ENCODE measurements at regions of chr4 and their contacts with region 1.

Region 1: DNA sequence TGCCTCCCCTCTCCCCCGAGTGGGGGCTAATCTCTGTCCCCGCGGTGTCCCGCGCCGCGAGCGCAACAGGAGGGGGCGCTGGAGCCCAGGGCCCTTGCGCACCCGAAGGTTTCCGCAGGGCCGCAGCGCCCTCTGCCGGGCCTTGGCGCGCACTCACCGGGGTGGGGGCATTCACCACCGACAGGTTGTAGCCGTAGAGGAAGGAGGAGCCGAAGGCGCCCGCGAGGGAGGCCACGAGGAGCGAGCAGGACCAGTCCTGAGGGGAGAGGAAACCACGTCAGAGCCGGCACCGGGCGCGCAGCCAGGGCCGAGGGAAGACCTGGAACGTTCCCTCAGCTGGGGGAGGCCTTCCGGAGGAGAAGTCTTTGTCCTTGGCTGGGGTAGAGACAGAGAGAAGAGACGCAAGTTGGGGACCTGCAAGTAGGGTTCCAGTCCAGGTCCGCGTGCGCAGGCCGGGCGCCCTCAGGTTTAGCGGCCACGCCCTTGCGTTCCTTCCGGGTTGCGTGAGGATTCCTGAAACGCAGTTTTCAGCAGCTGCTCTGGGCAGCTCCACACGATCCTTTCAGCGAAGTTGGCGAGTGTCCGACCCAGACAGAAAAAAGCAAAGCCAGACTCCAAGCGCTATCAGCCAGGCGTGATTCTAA is 2.4 kb downstream of the SLC2A9 start:
- DNase-seq: peak; percentile 94
- H3K4me3 ChIP-seq: peak overlapping the region; percentile 23 to 41
- H3K27ac ChIP-seq: peak overlapping the region; percentile 85 to 86
- H3K4me1 ChIP-seq: peaks cover 7% of the 10 kb centered on the region
- H3K27me3 ChIP-seq: no peaks in the 10 kb centered on the region
- CTCF ChIP-seq: peak; percentile 99 to 100 (median 99)
- POLR2A ChIP-seq: peak; percentile 49

Region 2: DNA sequence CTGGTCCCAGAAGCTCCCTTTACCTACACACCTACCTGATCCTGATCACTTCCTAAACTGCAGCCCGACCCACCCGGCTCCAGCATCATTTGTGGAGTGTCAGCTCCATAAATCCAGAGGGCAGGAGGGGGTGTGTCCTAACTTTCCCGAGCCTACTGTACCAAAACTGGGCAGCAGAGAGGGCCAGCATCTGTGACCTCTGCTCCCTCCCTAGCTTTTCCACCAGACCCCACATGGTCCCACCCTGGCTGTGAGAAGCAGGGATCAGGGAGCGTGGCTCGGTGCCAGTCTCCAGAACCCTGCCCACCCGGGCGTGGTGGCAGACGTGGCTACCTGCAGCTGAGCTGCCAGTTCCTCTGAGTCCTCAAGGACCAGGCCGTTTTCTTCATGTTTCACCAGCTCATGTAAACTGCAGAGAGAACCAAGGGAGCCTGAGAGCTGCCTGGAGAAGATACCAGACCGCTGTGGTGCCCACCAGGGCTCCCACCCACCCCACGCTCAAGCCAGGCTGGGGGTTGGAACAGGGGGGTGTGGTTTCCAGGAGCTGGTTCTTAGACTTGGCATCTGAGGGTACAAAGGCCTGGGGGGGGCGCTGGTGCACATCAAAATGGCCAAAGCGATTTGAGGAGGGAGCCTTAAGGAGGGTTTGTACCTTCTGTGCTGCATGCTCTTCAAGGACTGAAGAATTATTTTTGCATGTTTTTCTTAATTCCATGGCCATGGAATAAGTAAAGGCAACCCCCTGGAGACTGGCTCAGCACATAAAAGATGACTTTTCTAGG is 314.2 kb before region 1 on chr4:
- intact Hi-C with region 1: loop called (anchors 10 kb)
- DNase-seq: no peak
- H3K4me3 ChIP-seq: no peak overlapping the region
- H3K27ac ChIP-seq: no peak overlapping the region
- H3K4me1 ChIP-seq: no peaks in the 10 kb centered on the region
- H3K27me3 ChIP-seq: no peaks in the 10 kb centered on the region
- CTCF ChIP-seq: no peak
- POLR2A ChIP-seq: no peak

Region 3: DNA sequence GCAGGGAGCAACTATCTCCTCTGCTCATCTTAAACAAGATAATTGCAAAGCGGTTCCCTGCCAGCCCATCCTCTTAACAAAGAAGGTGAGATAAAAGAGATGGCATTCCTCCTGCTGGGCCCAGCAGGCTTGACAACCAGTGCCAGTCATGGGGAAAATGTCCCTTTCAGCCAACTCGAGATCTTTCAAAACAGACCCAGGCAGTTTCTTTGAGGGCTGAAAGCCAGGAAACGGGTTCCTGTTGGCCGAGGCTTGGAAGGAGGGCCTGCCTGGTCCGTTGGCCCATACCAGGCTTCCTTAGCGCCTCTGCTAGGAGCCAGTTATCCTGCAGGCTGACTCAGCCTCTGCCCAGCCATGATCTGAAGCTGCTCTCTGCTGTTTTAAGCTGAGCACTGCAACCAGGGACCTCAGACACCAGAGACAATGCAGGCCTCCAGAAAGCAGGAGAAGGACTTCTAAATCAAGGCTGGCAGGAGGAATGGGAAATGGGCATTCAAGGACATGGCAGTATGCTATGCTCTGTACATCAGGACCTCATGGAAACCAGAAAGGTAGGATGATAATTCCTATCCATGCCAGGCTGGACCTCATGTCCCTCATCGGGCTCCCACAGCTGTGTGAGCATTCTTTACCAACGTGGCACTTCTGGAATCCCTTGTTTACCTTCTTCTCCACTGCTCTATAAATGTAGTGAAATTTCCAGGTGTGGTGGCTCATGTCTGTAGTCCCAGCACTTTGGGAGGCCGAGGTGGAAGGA is 44.8 kb after region 1 on chr4:
- intact Hi-C with region 1: loop called (anchors 2 kb)
- DNase-seq: peak; percentile 88
- H3K4me3 ChIP-seq: no peak overlapping the region
- H3K27ac ChIP-seq: peak overlapping the region; percentile 44 to 52
- H3K4me1 ChIP-seq: no peaks in the 10 kb centered on the region
- H3K27me3 ChIP-seq: no peaks in the 10 kb centered on the region
- CTCF ChIP-seq: peak; percentile 46 to 92 (median 74)
- POLR2A ChIP-seq: no peak

Region 4: GRCh38 chr4:10157478-10158332 is 138.8 kb after region 1 on chr4:
- intact Hi-C with region 1: loop called (anchors 10 kb)
- DNase-seq: peak; percentile 64
- H3K4me3 ChIP-seq: no peak overlapping the region
- H3K27ac ChIP-seq: peak overlapping the region in 1 of 2 donors; percentile 24
- H3K4me1 ChIP-seq: no peaks in the 10 kb centered on the region
- H3K27me3 ChIP-seq: no peaks in the 10 kb centered on the region
- CTCF ChIP-seq: peak; percentile 38 to 89 (median 82)
- POLR2A ChIP-seq: no peak